Panc1 (cell line): ENCODE measurements at regions of chrX and their contacts with region 1.

Region 1: DNA sequence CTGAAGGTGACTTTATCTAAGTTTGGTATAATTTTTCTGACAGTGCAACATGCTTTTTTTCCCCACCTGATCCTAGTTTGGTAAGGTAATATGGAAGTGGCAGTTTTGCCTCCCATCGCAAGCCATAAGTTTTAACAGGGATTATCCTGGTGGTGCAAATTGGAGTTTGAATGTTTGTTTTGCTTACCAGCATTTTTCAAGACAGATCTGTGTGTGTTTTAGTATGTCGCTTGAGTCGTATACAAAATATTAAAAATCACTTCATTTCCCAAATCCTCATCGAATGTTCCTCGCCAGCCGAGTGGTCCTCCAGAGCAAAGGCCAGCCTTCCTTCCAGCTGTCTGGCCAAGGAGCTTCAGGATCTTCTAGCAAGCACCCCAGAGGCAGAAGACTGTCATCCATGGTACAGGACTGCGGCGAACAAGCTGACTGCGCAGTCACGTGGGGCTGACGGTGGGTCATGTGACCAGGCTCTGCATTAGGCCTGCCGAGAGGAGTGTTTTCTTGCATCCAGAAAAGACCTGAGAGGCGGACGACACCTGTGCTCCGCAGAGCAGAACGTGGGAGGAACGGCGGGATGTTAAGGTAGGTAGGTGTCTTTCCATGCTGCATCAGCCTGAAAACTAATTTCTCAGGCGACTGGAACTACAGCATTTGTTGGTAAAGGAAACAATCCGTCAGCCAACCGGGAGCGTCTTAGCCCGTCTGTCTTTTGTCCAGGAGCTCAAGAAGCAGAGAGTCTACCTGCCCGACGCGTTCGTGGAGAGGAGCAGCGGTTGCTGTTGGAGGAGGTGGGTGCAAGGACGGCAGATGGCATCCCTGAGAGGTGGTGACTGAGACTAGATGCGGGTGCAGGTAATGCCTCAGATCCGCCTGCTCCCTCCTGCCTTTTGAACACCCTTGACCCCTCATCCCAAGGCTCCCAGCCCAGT is at the start of gene GPRASP3:
- DNase-seq: peak; percentile 71
- ATAC-seq: peak; percentile 99
- H3K4me3 ChIP-seq: peak within 1 kb of the TSS; percentile 56 to 87
- H3K27ac ChIP-seq: peak within 1 kb of the TSS; percentile 64; the same call in 1 of the 2 replicates
- H3K4me1 ChIP-seq: peaks cover 3% of the 10 kb centered on the region; the same call in 1 of the 2 replicates
- H3K27me3 ChIP-seq: no peaks in the 10 kb centered on the region
- CTCF ChIP-seq: no peak
- total RNA-seq, gene GPRASP3: 5.6 TPM

Region 2: DNA sequence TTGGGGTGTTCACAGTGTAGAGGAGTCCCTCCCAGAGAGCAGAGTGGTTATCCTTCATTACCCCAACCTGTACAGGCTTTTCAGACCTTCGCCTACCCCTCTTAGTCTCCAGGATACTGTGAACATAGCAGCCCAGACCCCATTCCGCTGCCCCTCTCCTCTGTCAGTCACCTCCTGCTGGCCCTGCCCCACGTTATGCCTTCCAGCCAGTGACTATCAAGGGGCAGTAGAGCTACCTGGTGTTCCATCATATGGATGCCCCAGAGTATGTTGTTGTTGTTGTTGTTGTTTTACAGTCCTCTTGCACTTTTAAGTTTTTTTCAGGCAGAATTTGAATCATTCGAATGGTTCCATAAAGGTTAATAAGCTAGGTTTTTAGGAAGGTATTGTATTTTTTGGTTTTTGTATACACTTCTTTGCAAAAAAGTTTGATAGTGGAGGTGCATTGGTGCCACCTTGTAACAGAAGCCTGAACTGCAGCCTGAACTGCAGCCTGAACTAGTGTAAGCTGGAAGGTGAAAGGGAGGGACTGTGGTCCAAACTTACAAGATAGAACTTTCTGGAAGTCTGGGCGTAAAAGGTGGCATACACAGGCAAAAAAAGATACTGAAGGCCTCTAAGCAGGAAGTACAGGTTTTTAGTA is 115.1 kb after region 1 on chrX:
- CTCF ChIA-PET with region 1: no interaction called
- POLR2A ChIA-PET with region 1: no interaction called
- in situ Hi-C with region 1: no loop called
- intact Hi-C with region 1: loop called (anchors 10 kb)
- DNase-seq: peak; percentile 25
- ATAC-seq: peak; percentile 80
- H3K4me3 ChIP-seq: no peak overlapping the region
- H3K27ac ChIP-seq: no peak overlapping the region
- H3K4me1 ChIP-seq: no peaks in the 10 kb centered on the region
- H3K27me3 ChIP-seq: no peaks in the 10 kb centered on the region
- CTCF ChIP-seq: peak; percentile 78